Tibial artery (tissue), 4 donors: ENCODE measurements at regions of chr11 and their contacts with region 1.

Region 1: DNA sequence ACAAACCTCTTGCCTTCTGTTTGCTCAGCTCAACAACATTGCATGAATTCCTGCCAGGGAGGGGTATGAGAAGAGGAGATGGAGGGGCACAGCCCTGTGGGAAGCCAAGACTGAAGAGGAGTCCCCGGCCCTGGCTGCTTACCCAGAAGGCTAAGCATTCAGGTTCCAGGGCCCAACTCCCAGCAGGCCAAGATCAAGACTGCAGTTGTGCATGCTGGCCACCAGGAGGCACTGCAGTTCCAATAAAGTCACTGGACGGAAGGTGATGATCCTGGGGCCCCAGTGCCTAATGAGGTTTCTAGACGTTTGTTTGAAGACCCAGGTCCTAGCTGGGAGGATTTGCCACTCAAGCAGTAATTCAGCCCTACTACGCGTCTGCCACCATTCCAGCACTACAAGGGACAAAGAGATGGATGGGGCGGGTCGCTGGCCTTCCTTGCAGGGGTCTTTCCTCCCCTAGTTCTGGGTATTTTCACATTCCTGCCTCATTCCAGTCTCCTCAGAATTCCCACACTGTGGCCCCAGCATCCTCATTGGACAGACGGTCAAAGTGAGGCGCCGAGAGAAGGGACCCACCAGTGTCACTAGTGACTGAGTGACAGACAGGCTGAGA is 23.6 kb downstream of the ALX4 start:
- DNase-seq: no peak
- H3K4me3 ChIP-seq: no peak overlapping the region
- H3K27ac ChIP-seq: no peak overlapping the region
- H3K4me1 ChIP-seq: peaks cover 0 to 11% (median 0%) of the 10 kb centered on the region in 4 donors
- H3K27me3 ChIP-seq: no peaks in the 10 kb centered on the region
- CTCF ChIP-seq: peak; percentile 89

Region 2: DNA sequence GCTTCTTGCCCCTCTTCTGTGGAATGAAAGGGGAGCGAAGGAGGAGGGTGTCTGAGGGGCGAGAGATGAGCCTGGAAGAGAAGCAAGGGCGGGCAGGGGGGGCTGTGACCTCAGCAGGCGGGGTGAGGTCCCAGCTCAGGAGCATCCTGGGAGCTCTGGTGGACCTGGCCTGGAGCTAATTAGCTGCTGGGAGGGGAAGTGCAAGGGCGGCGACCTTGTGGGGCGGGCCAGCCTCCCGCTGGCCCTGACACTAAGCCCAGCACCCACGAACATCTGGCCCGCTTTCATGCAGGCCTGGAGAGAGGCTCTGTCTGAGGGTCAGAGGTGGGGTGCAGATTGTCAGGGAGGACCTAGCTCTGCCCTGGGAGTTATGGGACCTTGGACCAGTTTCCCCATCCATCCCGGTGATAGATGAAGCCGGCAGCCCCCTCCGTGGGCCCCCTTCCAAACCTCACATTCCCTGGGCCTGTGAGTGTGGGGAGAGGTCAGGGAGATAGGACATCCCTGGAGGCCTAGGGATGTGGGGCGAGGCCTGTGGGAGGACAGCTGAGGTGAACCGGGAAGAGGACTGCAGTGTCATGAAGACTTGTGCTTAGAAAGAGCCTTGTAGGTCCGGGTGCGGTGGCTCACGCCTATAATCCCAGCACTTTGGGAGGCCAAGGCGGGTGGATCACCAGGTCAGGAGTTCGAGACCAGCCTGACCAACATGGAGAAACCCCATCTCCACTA is 250.6 kb after region 1 on chr11:
- intact Hi-C with region 1: loop called (anchors 2 kb)
- DNase-seq: no peak
- H3K4me3 ChIP-seq: no peak overlapping the region
- H3K27ac ChIP-seq: no peak overlapping the region
- H3K4me1 ChIP-seq: peaks cover 0 to 6% (median 1%) of the 10 kb centered on the region in 4 donors
- H3K27me3 ChIP-seq: peaks cover 0 to 32% of the 10 kb centered on the region in 2 donors
- CTCF ChIP-seq: no peak